ENCODE measurements at regions of chr15 and their contacts with region 1.

Region 1: DNA sequence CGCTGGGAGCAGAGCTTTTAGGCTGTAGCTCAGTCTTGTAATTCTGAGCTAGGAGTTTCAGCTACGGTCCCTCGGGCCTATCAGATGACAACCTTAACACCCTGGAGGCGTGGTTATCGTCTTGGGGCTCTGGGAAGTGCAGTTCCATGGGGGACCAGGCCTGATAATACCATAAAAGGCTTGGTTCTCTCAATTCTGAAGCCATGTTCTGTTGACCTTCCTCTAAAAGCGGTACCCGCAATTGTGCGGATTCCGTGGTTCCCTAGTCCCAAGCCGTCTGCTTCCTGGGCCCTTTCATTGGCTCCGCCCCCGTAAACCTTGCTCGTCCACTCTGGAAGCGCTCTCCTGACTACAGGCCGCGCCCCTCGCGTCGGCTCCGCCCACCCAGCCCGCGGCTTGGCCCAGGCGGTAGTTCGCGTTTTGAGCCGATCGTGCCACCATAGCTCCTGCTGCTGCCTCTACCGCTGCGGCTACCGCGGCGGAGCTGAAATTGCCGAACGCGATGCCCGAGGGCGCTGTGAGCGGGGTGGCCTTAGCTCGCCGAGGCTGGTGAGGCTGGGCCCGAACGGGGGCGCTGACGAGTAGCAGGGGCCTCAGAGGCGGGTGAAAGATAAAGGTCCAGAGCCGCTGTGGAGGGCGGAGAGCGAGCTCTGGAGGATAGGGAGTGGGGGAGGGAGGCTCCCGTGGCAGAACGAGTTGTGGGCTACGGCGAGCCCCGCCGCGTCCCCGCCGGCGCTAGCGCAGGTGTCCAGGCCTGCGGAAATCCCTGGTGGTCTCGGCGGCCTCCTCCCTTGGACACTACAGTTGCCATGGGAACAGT is at the start of gene MAPKBP1:
- DNase-seq: peak; percentile 96
- ATAC-seq: peak; percentile 87
- H3K4me3 ChIP-seq: peak within 1 kb of the TSS; percentile 92
- H3K27ac ChIP-seq: peak within 1 kb of the TSS; percentile 77
- H3K4me1 ChIP-seq: peaks cover 12% of the 10 kb centered on the region
- H3K27me3 ChIP-seq: no peaks in the 10 kb centered on the region
- CTCF ChIP-seq: peak; percentile 85 to 98 (median 87)
- EP300 ChIP-seq: no peak; a peak in 1 of 4 replicates
- POLR2A ChIP-seq: peak; percentile 87
- RAD21 ChIP-seq: peak; percentile 53
- polyA plus RNA-seq, gene MAPKBP1: 0.44 to 0.50 TPM

Region 2: GRCh38 chr15:41603941-41604911 is 170.0 kb before region 1 on chr15:
- CTCF ChIA-PET with region 1: interaction called, 12 read pairs
- POLR2A ChIA-PET with region 1: no interaction called
- RAD21 ChIA-PET with region 1: interaction called, 9 read pairs
- SMC1A ChIA-PET with region 1: interaction called, 13 read pairs
- in situ Hi-C with region 1: no loop called
- intact Hi-C with region 1: no loop called
- DNase-seq: no peak
- ATAC-seq: peak; percentile 97
- H3K4me3 ChIP-seq: no peak overlapping the region
- H3K27ac ChIP-seq: no peak overlapping the region
- H3K4me1 ChIP-seq: no peaks in the 10 kb centered on the region
- H3K27me3 ChIP-seq: no peaks in the 10 kb centered on the region
- CTCF ChIP-seq: peak; percentile 68 to 77 (median 75)
- EP300 ChIP-seq: no peak
- POLR2A ChIP-seq: no peak
- RAD21 ChIP-seq: peak; percentile 64

Region 3: GRCh38 chr15:41790756-41791546 is 16.7 kb after region 1 on chr15:
- CTCF ChIA-PET with region 1: interaction called, 179 read pairs
- POLR2A ChIA-PET with region 1: interaction called, 170 read pairs
- RAD21 ChIA-PET with region 1: interaction called, 169 read pairs
- SMC1A ChIA-PET with region 1: interaction called, 189 read pairs
- in situ Hi-C with region 1: no loop called
- intact Hi-C with region 1: loop called (anchors 2 kb)
- DNase-seq: no peak
- ATAC-seq: peak; percentile 73
- H3K4me3 ChIP-seq: no peak overlapping the region
- H3K27ac ChIP-seq: peak overlapping the region; percentile 64
- H3K4me1 ChIP-seq: peaks cover 33% of the 10 kb centered on the region
- H3K27me3 ChIP-seq: no peaks in the 10 kb centered on the region
- CTCF ChIP-seq: no peak
- EP300 ChIP-seq: no peak
- POLR2A ChIP-seq: no peak
- RAD21 ChIP-seq: no peak

Region 4: DNA sequence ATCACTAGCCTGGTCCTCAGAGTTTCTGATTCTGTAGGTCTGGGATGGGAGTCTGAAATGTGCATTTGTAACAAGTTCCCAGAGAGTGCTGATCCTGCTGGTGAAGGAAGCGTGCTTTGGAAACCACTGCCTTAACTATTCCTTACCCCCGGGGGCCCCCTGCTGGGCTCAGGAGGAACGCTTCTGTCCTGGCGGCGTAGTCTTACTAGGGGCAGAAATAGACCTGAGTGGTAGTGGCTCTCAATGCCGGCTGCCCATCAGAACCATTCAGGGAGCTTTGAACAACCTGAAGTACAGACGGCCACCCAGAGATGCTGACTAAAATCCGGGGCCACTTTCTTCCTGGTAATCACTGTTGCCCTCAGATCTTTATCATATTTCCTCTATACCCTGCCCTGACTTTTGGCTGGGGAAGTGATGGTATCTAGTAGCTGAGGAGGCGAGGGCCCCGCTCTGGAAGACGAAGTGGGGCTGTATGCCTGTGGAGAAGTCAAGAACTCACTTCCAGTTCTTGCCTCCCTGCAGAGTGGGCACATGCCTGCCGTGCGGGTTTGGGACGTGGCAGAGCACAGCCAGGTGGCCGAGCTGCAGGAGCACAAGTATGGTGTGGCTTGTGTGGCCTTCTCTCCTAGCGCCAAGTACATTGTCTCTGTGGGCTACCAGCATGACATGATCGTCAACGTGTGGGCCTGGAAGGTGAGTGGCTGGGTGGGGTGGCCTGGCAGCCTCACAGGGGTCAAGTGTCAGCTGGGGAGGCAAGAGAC is 37.3 kb after region 1 on chr15:
- CTCF ChIA-PET with region 1: interaction called, 365 read pairs
- POLR2A ChIA-PET with region 1: interaction called, 28 read pairs
- RAD21 ChIA-PET with region 1: interaction called, 305 read pairs
- SMC1A ChIA-PET with region 1: interaction called, 268 read pairs
- in situ Hi-C with region 1: loop called (anchors 5 kb)
- intact Hi-C with region 1: loop called (anchors 1 kb)
- DNase-seq: no peak
- ATAC-seq: peak; percentile 98
- H3K4me3 ChIP-seq: no peak overlapping the region
- H3K27ac ChIP-seq: no peak overlapping the region
- H3K4me1 ChIP-seq: no peaks in the 10 kb centered on the region
- H3K27me3 ChIP-seq: no peaks in the 10 kb centered on the region
- CTCF ChIP-seq: peak; percentile 90 to 94 (median 92)
- EP300 ChIP-seq: no peak
- POLR2A ChIP-seq: no peak
- RAD21 ChIP-seq: peak; percentile 98

Region 5: GRCh38 chr15:41904541-41905005 is 130.3 kb after region 1 on chr15:
- CTCF ChIA-PET with region 1: interaction called, 79 read pairs
- POLR2A ChIA-PET with region 1: interaction called, 3 read pairs
- RAD21 ChIA-PET with region 1: interaction called, 69 read pairs
- SMC1A ChIA-PET with region 1: interaction called, 49 read pairs
- in situ Hi-C with region 1: no loop called
- intact Hi-C with region 1: loop called (anchors 1 kb)
- DNase-seq: peak; percentile 21
- ATAC-seq: peak; percentile 96
- H3K4me3 ChIP-seq: no peak overlapping the region
- H3K27ac ChIP-seq: no peak overlapping the region
- H3K4me1 ChIP-seq: no peaks in the 10 kb centered on the region
- H3K27me3 ChIP-seq: no peaks in the 10 kb centered on the region
- CTCF ChIP-seq: peak; percentile 82 to 91 (median 86)
- EP300 ChIP-seq: no peak
- POLR2A ChIP-seq: no peak; the same call in none of the 2 replicates
- RAD21 ChIP-seq: peak; percentile 78

Region 6: DNA sequence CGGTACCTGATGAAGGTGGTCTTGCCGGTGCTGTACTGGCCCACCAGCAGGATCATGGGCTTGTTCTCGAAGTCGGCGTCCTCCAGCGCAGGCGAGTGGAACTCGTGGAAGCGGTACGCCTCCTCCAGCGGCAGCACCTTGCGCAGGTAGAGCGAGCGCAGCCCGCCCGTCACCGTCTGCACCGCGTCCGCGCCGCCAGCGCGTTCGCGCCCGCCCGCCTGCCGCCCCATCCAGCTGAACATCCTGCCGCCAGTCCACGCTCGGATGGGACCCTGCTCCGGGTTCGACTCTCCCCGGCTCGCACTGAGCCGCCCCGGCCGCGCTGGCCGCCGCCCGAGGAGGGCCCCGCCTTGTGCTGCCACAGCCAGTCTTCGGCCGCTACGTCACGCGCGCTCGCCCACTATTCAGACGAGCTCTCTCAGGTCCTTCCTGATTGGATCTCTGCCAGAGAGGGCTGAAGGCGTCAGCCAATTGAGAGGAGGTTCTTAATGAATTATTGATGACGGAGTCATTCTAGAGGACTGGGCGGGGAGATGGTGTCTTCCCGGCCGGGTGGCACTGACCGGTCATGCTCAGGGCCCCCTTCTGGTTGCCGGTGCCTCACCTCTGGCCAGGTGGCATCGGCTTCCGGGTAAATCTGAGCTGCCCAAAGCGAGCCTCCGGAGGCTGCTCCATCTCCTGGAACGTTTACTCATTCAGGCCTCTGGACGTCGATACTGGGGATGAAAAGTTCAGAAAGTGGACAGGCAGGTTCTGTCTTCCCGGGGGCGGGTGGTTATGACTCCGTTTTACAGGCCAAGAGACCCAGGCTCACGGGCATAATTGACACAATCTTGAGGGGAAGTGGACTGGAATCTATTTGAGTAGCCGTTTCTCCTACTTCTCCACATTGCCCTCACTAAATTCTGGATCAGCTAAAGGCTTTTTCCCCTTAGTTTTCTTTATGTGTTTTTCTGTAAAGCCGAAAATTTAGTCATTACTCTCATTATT is 198.3 kb after region 1 on chr15 and contains the start of gene EHD4:
- CTCF ChIA-PET with region 1: interaction called, 10 read pairs
- POLR2A ChIA-PET with region 1: interaction called, 5 read pairs
- RAD21 ChIA-PET with region 1: interaction called, 17 read pairs
- SMC1A ChIA-PET with region 1: interaction called, 8 read pairs
- in situ Hi-C with region 1: no loop called
- intact Hi-C with region 1: loop called (anchors 5 kb)
- DNase-seq: peak; percentile 92
- ATAC-seq: peak; percentile 78
- H3K4me3 ChIP-seq: peak within 1 kb of the TSS; percentile 93
- H3K27ac ChIP-seq: peak within 1 kb of the TSS; percentile 100
- H3K4me1 ChIP-seq: peaks cover 24% of the 10 kb centered on the region
- H3K27me3 ChIP-seq: no peaks in the 10 kb centered on the region
- CTCF ChIP-seq: peak in 2 of 3 experiments; percentile 34 to 38; a peak in 3 of 6 replicates
- EP300 ChIP-seq: 0 out of 4 replicates have a peak, but pooled peaks of 1 of the 2 experiments have one; percentile 11
- POLR2A ChIP-seq: peak; percentile 96
- RAD21 ChIP-seq: no peak; the same call in 1 of the 2 replicates
- polyA plus RNA-seq, gene EHD4: 4.2 to 8.6 TPM

Region 7: DNA sequence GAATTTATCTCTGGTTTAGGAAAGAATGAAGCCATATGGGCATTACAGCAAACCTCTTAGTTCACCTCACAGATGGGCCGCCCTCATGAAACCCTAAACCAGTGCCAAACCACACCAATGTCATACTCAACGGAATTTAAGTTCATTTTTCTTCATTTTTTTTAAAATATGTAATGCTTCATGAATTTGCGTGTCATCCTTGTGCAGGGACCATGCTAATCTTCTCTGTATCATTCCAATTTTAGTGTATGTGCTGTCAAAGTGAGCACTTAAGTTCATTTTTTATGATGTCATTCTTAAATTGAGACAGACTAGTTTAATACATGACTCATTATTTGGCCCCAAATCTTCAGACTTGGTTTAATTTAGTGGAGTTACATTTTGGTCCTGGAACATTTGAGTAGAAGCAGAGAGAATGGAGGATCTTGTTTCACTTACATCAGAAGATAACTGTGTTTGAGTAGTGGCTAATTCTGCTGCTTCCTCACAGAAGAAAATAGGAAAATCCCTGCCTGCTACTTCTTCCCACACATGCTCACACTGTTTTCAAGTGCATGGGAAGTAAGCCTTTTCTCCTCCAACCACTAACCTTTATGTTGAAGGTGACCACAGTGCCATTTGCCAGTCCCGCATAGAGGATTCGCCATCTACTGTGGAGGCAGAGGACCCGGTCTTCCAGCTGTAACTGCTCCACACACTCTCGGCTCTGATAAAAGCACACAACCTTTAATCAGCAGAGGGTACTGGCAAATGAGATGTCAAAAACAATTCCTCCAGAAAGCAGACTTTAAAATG is 653.4 kb after region 1 on chr15:
- CTCF ChIA-PET with region 1: no interaction called
- POLR2A ChIA-PET with region 1: no interaction called
- RAD21 ChIA-PET with region 1: no interaction called
- SMC1A ChIA-PET with region 1: no interaction called
- in situ Hi-C with region 1: no loop called
- intact Hi-C with region 1: no loop called
- DNase-seq: no peak
- ATAC-seq: no peak
- H3K4me3 ChIP-seq: no peak overlapping the region
- H3K27ac ChIP-seq: no peak overlapping the region
- H3K4me1 ChIP-seq: no peaks in the 10 kb centered on the region
- H3K27me3 ChIP-seq: no peaks in the 10 kb centered on the region
- CTCF ChIP-seq: no peak
- EP300 ChIP-seq: no peak
- POLR2A ChIP-seq: no peak
- RAD21 ChIP-seq: no peak

Measured in GM12878 (cell line).